ENCODE measurements at regions of chrX and their contacts with region 1.

Region 1: GRCh38 chrX:116490104-116490503 is 27.3 kb upstream of the CT83 start:
- DNase-seq: no peak
- ATAC-seq: no peak
- H3K4me3 ChIP-seq: no peak overlapping the region
- H3K27ac ChIP-seq: no peak overlapping the region
- H3K4me1 ChIP-seq: no peaks in the 10 kb centered on the region
- H3K27me3 ChIP-seq: no peaks in the 10 kb centered on the region
- CTCF ChIP-seq: peak; percentile 26
- POLR2A ChIP-seq: no peak
- RAD21 ChIP-seq: peak; percentile 6; the same call in 1 of the 2 replicates

Region 2: GRCh38 chrX:117743469-117744251 is 1253.6 kb after region 1 on chrX:
- CTCF ChIA-PET with region 1: no interaction called
- POLR2A ChIA-PET with region 1: no interaction called
- dilution Hi-C with region 1: no loop called
- in situ Hi-C with region 1: no loop called
- intact Hi-C with region 1: loop called (anchors 5 kb)
- DNase-seq: peak; percentile 1
- ATAC-seq: peak; percentile 46; the same call in 1 of the 2 replicates
- H3K4me3 ChIP-seq: no peak overlapping the region
- H3K27ac ChIP-seq: no peak overlapping the region
- H3K4me1 ChIP-seq: no peaks in the 10 kb centered on the region
- H3K27me3 ChIP-seq: no peaks in the 10 kb centered on the region
- CTCF ChIP-seq: 0 out of 2 replicates have a peak, but pooled peaks have one; percentile 19
- POLR2A ChIP-seq: no peak
- RAD21 ChIP-seq: no peak

Region 3: GRCh38 chrX:117982694-117983392 is 1492.7 kb after region 1 on chrX:
- CTCF ChIA-PET with region 1: no interaction called
- POLR2A ChIA-PET with region 1: no interaction called
- dilution Hi-C with region 1: no loop called
- in situ Hi-C with region 1: no loop called
- intact Hi-C with region 1: loop called (anchors 5 kb)
- DNase-seq: no peak
- ATAC-seq: no peak
- H3K4me3 ChIP-seq: no peak overlapping the region
- H3K27ac ChIP-seq: no peak overlapping the region
- H3K4me1 ChIP-seq: peaks cover 4% of the 10 kb centered on the region; the same call in 1 of the 2 replicates
- H3K27me3 ChIP-seq: no peaks in the 10 kb centered on the region
- CTCF ChIP-seq: no peak
- POLR2A ChIP-seq: no peak
- RAD21 ChIP-seq: no peak

Region 4: DNA sequence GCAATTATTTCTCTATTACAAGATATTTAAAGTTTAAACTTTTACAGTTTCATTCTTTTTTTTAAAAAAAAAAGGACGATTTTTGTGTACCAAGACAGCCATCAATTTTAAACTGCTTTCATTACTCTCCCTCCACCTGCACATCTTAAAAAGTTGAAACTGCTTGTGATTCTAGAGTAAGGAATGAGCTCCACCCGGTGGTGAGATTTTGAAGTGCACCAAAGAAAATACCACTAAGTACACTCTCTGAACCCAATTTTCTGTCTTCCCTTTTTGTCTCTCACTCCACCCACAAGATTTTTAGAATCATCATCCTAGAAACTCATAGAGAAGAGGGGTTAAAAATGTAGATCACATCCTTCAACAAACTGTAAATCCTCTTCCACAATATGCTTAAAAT is 1764.5 kb after region 1 on chrX:
- CTCF ChIA-PET with region 1: no interaction called
- POLR2A ChIA-PET with region 1: no interaction called
- dilution Hi-C with region 1: no loop called
- in situ Hi-C with region 1: no loop called
- intact Hi-C with region 1: loop called (anchors 2 kb)
- DNase-seq: peak; percentile 57
- ATAC-seq: peak; percentile 63
- H3K4me3 ChIP-seq: no peak overlapping the region
- H3K27ac ChIP-seq: no peak overlapping the region
- H3K4me1 ChIP-seq: peaks cover 1% of the 10 kb centered on the region; the same call in 1 of the 2 replicates
- H3K27me3 ChIP-seq: peaks cover 7% of the 10 kb centered on the region; the same call in 1 of the 2 replicates
- CTCF ChIP-seq: peak; percentile 68
- POLR2A ChIP-seq: no peak
- RAD21 ChIP-seq: peak; percentile 76

Measured in IMR-90 (cell line).